Mammary epithelial cell (primary cell): ENCODE measurements at regions of chr9 and their contacts with region 1.

Region 1: DNA sequence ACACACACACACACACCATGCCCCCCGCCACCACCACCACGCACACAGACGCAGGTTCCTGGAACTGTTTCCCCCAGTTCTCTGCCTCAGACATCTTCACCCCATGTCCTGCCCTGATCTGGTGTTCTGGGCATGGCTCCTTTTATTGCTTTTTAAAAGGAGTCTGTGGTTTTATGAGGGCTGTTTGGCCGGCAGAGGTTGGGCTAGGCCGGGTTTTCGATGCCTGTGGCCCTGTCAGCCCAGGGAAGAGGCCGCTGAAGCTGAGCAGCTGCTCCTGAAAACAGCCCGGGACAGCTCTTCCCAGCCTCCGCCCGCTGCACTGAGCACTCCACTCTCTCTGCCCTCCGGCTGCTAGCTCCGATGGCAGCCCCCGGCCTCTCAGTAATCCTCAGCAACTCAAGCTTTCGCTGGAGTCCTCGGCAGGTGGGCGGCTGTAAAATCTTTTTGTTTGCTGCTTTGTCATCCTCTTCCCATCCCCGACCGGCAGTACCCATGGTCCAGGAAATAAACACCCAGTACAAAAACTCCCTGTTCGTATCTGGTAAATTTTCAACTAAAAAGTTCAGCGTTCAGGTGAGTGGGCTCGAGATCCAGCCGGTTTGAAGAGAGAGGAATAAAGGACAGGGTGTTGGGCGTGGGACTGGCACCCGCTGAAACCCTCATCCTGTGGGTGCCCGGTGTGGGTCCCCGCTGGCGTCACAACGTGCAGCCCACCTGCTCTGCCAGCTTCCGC is 103.0 kb upstream of the ERCC6L2 start:
- DNase-seq: no peak
- H3K4me3 ChIP-seq: no peak overlapping the region
- H3K27ac ChIP-seq: no peak overlapping the region
- H3K4me1 ChIP-seq: no peaks in the 10 kb centered on the region
- H3K27me3 ChIP-seq: no peaks in the 10 kb centered on the region
- CTCF ChIP-seq: no peak

Region 2: DNA sequence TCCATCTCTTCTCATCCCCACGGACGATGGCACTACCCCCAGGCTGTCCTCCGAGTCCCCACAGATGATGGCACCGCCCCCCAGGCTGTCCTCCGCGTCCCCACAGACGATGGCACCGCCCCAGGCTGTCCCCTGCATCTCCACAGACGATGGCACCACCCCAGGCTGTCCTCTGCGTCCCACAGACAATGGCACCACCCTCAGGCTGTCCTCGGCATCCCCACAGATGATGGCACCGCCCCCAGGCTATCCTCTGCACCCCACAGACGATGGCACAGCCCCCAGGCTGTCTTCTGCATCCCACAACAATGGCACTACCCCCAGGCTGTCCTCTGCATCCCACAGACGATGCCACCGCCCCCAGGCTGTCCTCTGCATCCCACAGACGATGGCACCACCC is 198.3 kb before region 1 on chr9:
- CTCF ChIA-PET with region 1: no interaction called
- dilution Hi-C with region 1: no loop called
- in situ Hi-C with region 1: no loop called
- intact Hi-C with region 1: no loop called
- DNase-seq: no peak
- H3K4me3 ChIP-seq: no peak overlapping the region
- H3K27ac ChIP-seq: no peak overlapping the region
- H3K4me1 ChIP-seq: no peaks in the 10 kb centered on the region
- H3K27me3 ChIP-seq: no peaks in the 10 kb centered on the region
- CTCF ChIP-seq: no peak

Region 3: DNA sequence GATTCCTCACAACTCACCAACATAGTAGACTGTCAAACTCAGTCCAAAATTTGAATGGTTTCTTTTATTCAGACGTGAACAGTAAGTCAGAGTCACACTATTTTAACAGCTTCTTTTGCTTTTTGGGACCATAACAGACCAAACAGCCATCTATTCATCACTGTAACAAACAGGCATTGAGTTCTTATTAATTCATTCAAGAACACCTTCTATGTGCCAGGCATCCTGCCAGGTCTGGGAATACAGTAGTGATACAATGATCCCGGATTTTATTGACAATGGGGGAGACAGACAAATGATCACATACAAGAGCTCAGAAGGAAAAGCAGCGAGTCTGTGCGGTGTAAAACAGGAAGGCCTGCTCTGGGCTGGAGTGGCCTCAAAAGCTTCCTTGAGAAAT is 50.3 kb before region 1 on chr9:
- CTCF ChIA-PET with region 1: no interaction called
- dilution Hi-C with region 1: no loop called
- in situ Hi-C with region 1: no loop called
- intact Hi-C with region 1: no loop called
- DNase-seq: no peak
- H3K4me3 ChIP-seq: no peak overlapping the region
- H3K27ac ChIP-seq: no peak overlapping the region
- H3K4me1 ChIP-seq: no peaks in the 10 kb centered on the region
- H3K27me3 ChIP-seq: no peaks in the 10 kb centered on the region
- CTCF ChIP-seq: no peak

Region 4: DNA sequence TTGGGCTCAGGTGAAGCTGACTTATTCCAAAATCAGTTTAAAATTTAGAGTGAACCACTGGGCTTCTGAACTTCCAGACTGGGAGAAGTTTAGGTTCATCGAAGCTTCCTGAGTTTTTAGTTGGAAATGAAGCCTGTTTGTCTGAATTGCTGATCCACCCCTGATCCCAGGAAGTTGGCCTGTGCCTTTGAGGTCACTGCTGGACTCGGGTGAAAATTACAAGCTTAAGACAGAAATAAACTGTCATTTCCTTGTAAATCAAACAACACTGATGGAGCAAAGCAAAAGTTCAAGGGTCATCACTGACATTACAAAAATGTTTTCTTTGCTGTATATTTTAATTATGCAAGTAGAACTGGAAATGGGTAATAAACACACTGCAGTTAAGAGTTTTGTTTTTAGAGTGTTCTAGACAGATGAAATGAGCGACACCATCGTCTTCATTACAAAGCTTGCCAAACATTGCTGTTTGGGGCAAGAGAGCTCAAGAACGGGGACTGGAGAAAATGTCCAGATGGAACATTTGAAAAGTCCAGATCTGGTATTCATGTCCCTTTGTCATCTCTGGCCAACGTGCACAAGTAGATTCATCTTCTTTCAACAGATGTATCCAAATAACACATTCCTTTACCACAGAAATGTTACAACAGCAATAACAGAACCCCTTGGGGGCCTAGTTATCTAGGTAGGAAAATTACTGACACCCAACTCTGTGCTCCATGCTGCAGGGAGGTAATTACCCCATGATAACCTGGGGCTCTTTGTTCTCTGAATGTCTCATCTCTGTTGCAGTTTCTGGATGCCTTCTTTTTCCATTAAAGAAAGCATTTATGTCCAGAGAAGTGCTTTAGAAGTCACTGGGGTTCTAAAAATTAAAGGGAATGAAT is 39.4 kb before region 1 on chr9:
- CTCF ChIA-PET with region 1: no interaction called
- dilution Hi-C with region 1: loop called (anchors 5 kb)
- in situ Hi-C with region 1: no loop called
- intact Hi-C with region 1: no loop called
- DNase-seq: no peak
- H3K4me3 ChIP-seq: no peak overlapping the region
- H3K27ac ChIP-seq: no peak overlapping the region
- H3K4me1 ChIP-seq: no peaks in the 10 kb centered on the region
- H3K27me3 ChIP-seq: peaks cover 2% of the 10 kb centered on the region
- CTCF ChIP-seq: no peak